ENCODE measurements at regions of chr3 and their contacts with region 1.

Region 1: GRCh38 chr3:80000039-80000438 is 232.2 kb upstream of the ROBO1 start:
- DNase-seq: peak; percentile 56
- H3K4me3 ChIP-seq: no peak overlapping the region
- H3K27ac ChIP-seq: no peak overlapping the region
- H3K4me1 ChIP-seq: peaks cover 15% of the 10 kb centered on the region
- H3K27me3 ChIP-seq: no peaks in the 10 kb centered on the region
- CTCF ChIP-seq: no peak
- POLR2A ChIP-seq: no peak

Region 2: GRCh38 chr3:80010021-80010571 is 10.1 kb after region 1 on chr3:
- CTCF ChIA-PET with region 1: interaction called, 17 read pairs
- POLR2A ChIA-PET with region 1: no interaction called
- dilution Hi-C with region 1: no loop called
- intact Hi-C with region 1: no loop called
- DNase-seq: no peak
- H3K4me3 ChIP-seq: no peak overlapping the region
- H3K27ac ChIP-seq: no peak overlapping the region
- H3K4me1 ChIP-seq: no peaks in the 10 kb centered on the region
- H3K27me3 ChIP-seq: no peaks in the 10 kb centered on the region
- CTCF ChIP-seq: no peak
- POLR2A ChIP-seq: no peak

Region 3: GRCh38 chr3:80060664-80061063 is 60.6 kb after region 1 on chr3:
- CTCF ChIA-PET with region 1: no interaction called
- POLR2A ChIA-PET with region 1: no interaction called
- dilution Hi-C with region 1: no loop called
- intact Hi-C with region 1: no loop called
- DNase-seq: peak; percentile 37
- H3K4me3 ChIP-seq: no peak overlapping the region
- H3K27ac ChIP-seq: no peak overlapping the region
- H3K4me1 ChIP-seq: no peaks in the 10 kb centered on the region
- H3K27me3 ChIP-seq: no peaks in the 10 kb centered on the region
- CTCF ChIP-seq: no peak
- POLR2A ChIP-seq: no peak